Vagina (tissue), 2 donors: ENCODE measurements at regions of chr6 and their contacts with region 1.

Region 1: GRCh38 chr6:139597771-139598755 is 223.6 kb upstream of the CITED2 start:
- DNase-seq: no peak
- H3K4me3 ChIP-seq: no peak overlapping the region
- H3K27ac ChIP-seq: peak overlapping the region; percentile 37
- H3K4me1 ChIP-seq: peaks cover 28% of the 10 kb centered on the region
- H3K27me3 ChIP-seq: no peaks in the 10 kb centered on the region
- CTCF ChIP-seq: no peak
- POLR2A ChIP-seq: no peak

Region 2: DNA sequence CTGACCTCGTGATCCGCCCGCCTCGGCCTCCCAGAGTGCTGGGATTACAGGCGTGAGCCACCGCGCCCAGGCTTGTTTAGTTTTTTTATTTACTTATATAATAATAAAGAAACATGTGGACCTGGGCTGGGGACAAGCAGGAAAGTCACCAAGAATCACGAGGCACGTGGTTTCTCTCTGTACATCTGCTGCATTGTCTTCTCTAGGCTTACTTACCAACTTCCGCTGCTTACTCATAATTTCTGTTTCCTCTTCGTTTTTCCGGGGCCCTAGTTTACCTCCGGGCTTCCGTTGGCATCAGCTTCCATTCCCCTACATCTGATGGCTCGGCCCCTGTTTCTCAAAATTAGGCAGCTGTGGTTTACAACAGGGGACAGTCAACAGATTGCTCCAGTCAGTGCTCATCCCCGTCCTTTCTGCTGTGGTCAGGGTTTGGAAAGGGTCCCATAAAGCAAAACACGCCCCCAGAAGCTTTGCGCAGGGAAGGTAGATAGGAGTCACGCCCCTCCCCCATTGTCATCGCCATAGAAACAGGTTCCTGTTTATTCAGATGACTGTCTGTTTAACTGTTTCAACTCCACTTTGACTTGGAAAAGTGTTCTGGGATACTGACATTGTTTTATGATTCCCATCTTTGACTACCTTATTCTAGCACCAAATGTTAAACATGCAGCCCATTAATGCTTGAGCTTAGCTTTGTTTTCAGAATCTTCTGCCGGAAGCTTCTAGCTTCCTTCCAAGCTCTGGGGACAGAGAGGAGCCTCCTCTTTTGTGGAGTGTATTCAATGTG is 274.4 kb before region 1 on chr6:
- intact Hi-C with region 1: no loop called
- DNase-seq: no peak
- H3K4me3 ChIP-seq: peak overlapping the region in 1 of 2 donors; percentile 23
- H3K27ac ChIP-seq: peak overlapping the region; percentile 36
- H3K4me1 ChIP-seq: no peaks in the 10 kb centered on the region
- H3K27me3 ChIP-seq: no peaks in the 10 kb centered on the region
- CTCF ChIP-seq: no peak
- POLR2A ChIP-seq: no peak

Region 3: GRCh38 chr6:139764498-139764986 is 166.5 kb after region 1 on chr6:
- intact Hi-C with region 1: loop called (anchors 10 kb)
- DNase-seq: no peak
- H3K4me3 ChIP-seq: no peak overlapping the region
- H3K27ac ChIP-seq: peak overlapping the region; percentile 58
- H3K4me1 ChIP-seq: peaks cover 17% of the 10 kb centered on the region
- H3K27me3 ChIP-seq: no peaks in the 10 kb centered on the region
- CTCF ChIP-seq: no peak
- POLR2A ChIP-seq: no peak